Activated CD8-positive, alpha-beta memory T cell treated with anti-CD3 and anti-CD28 coated beads, Interleukin-2, amount 10 ng/mL, durations not matched to agents 7 days and 5 days (primary cell): ENCODE measurements at regions of chr2 and their contacts with region 1.

Region 1: DNA sequence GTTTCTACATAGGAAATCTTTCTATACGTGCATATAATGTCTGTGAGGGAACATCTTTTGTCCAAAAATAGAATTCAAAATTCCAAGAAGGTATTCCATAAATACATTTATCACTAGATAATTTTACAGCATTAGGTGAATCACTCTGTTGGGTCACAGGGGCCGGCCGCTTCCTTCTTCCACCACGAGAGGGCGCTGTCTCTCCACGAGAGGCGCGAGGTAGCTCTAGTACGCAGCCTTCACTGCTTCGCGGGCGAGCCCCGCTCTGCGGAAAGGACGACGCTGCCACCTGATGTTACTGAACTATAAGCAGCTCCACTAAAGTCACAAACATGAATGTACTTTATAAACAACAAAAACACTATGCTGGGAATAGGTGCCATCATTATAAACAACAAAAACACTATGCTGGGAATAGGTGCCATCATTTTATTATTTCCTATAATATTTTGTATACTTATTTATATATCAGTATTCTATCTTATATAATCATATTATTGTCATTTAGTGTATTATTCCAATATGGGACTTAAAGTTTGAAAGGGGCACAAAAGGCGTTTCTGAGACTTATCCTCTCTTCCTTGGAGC is 69.4 kb upstream of the REV1 start:
- DNase-seq: peak; percentile 86
- ATAC-seq: peak; percentile 92
- H3K4me3 Mint-ChIP-seq: no peak overlapping the region
- H3K27ac Mint-ChIP-seq: no peak overlapping the region
- H3K4me1 Mint-ChIP-seq: peaks cover 1% of the 10 kb centered on the region
- H3K27me3 Mint-ChIP-seq: peaks cover 5% of the 10 kb centered on the region

Region 2: DNA sequence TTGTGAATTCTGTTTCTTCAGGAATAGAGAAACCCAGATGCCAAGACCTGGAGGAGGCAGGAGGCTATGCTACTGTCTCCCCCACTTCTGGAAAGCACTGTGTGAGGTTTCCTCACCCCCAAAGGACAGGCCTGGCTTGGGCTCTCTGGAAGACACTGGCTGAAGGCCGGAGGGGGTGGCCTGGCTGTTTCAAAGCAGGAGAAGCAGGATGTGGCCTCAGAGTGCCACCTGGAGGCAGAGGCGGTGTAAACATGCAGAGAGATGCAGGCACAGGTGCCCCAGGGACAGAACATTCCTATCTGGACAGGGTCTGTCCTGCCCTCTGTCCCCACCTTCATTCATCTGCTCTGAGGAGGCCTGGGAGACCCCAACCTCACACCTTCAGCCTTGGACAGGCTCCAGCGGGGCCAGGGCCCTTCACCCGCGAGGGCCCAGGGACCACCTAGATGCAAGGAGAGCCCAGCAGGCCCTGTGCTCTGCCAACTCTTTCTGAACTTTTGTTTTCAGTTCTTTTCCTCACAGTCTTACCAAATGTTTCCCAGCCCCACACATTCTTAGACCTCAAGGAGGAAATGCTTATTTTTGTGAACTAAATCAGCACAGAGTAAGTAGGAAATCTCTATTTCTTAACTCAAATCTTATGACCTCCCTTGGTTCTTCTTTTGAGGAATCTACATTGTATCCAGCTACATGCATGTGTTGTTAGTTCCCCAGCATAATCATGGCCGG is 683.9 kb after region 1 on chr2:
- CTCF ChIA-PET with region 1: interaction called, 13 read pairs
- DNase-seq: peak; percentile 63
- ATAC-seq: no peak
- H3K4me3 Mint-ChIP-seq: no peak overlapping the region
- H3K27ac Mint-ChIP-seq: no peak overlapping the region
- H3K4me1 Mint-ChIP-seq: no peaks in the 10 kb centered on the region
- H3K27me3 Mint-ChIP-seq: peaks cover 2% of the 10 kb centered on the region